ENCODE measurements at regions of chr2 and their contacts with region 1.

Region 1: DNA sequence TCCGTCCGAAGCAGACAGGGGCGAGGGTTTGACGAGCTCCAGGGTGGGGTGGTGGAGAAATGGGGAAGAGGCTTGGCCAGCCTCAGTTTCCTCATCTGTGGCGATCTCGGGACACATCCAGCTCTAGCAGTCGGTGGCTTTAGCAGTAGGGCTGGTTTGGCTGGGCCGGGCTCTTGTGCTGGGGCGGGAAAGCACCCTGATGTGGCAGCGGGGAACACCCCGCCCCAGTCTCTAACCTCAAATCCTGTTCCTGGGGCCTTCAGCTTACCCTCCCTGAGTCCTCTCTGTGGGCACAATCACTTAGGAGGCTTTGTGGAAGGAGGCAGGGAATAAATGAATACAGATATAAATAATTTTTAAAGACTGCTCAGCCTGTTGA is 26.5 kb upstream of the MCFD2 start:
- DNase-seq: peak; percentile 93
- H3K4me3 Mint-ChIP-seq: peak overlapping the region; percentile 97
- H3K27ac Mint-ChIP-seq: peak overlapping the region; percentile 100
- H3K4me1 Mint-ChIP-seq: peaks cover 51% of the 10 kb centered on the region
- H3K27me3 Mint-ChIP-seq: no peaks in the 10 kb centered on the region

Region 2: GRCh38 chr2:46977899-46978298 is 35.8 kb after region 1 on chr2:
- intact Hi-C with region 1: loop called (anchors 1 kb)
- DNase-seq: no peak
- H3K4me3 Mint-ChIP-seq: no peak overlapping the region
- H3K27ac Mint-ChIP-seq: peak overlapping the region; percentile 84
- H3K4me1 Mint-ChIP-seq: peaks cover 57% of the 10 kb centered on the region
- H3K27me3 Mint-ChIP-seq: no peaks in the 10 kb centered on the region

Region 3: DNA sequence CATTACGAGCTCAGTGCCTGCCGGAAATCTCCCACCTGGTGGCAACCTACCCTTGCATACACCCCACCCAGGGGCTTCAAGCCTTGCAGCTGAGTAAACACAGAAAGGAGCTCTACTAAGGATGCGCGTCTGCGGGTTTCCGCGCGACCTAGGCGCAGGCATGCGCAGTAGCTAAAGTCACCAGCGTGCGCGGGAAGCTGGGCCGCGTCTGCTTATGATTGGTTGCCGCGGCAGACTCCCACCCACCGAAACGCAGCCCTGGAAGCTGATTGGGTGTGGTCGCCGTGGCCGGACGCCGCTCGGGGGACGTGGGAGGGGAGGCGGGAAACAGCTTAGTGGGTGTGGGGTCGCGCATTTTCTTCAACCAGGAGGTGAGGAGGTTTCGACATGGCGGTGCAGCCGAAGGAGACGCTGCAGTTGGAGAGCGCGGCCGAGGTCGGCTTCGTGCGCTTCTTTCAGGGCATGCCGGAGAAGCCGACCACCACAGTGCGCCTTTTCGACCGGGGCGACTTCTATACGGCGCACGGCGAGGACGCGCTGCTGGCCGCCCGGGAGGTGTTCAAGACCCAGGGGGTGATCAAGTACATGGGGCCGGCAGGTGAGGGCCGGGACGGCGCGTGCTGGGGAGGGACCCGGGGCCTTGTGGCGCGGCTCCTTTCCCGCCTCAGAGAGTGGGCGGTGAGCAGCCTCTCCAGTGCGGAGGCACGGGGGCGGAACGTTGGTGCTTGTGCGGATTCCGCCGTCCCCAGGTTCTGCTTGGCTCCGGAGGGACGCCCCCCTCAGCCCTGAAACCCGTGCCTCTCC is 460.9 kb after region 1 on chr2 and contains the start of gene MSH2:
- intact Hi-C with region 1: loop called (anchors 2 kb)
- DNase-seq: peak; percentile 98
- H3K4me3 Mint-ChIP-seq: peak within 1 kb of the TSS; percentile 97
- H3K27ac Mint-ChIP-seq: peak within 1 kb of the TSS; percentile 96
- H3K4me1 Mint-ChIP-seq: peaks cover 31% of the 10 kb centered on the region
- H3K27me3 Mint-ChIP-seq: no peaks in the 10 kb centered on the region
- total RNA-seq, gene MSH2: 79.7 and 79.8 TPM in 2 replicates

Measured in activated CD4-positive, alpha-beta T cell treated with anti-CD3 and anti-CD28 coated beads, Interleukin-2, amount 10 ng/mL, durations not matched to agents 24 days and 14 days (primary cell).